Thyroid gland (tissue), 4 donors: ENCODE measurements at regions of chr10 and their contacts with region 1.

Region 1: DNA sequence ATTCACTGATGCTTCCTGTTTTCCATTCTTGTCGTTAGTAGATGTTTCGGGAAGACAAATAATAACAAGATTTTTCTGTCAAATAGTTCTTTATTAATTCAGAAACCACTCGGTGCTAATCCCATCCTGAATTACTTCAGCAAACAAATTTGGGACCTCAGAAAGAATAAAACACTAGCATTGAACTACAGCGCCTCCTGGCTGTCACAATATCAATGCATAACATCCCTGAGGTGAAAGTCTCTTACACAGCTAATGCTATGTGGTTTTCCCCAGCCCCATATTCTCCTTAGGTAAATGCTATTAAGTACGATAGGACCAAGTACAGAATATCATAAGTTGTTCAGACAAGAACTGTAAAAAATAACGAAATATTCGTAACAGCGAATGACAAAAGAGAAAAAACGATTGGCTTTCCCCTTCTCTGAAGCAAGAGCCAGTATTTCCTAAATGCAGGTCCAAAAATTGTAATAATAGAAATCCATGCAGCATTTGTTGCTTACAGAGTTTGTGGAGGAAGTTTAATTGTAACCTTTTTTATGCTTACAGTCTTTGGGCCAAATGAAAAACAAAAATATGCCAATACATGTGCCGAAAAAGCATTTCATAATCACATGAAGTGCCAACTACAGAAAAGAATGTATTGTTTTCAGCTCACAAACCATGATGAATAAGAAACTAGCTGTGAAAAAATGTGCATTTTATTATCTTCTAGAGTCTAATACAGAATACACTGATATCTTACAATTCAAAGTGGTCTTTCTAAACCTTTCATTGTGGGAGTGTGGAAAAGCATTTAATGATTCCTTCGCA is 47.3 kb downstream of the MYPN start:
- DNase-seq: peak; percentile 52 to 57
- H3K4me3 ChIP-seq: no peak overlapping the region
- H3K27ac ChIP-seq: no peak overlapping the region
- H3K4me1 ChIP-seq: peaks cover 0 to 11% of the 10 kb centered on the region in 2 donors
- H3K27me3 ChIP-seq: no peaks in the 10 kb centered on the region
- CTCF ChIP-seq: peak; percentile 53 to 72 (median 60)
- POLR2A ChIP-seq: no peak

Region 2: DNA sequence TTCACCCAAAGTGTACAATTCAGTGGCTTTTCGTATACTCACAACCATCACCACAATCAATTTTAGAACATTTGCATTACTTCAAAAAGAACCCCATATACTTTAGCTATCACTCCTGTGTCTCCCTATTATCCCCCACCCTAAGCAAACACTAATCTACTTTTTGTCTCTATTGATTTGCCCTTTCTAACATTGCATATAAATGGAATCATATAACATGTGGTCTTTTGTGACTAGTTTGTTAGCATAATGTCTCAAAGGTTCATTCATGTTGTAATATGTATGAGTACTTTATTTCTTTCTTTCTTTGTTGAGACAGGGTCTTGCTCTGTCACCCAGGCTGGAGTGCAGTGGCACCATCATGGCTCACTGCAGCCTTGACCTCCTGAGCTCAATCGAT is 297.6 kb before region 1 on chr10:
- intact Hi-C with region 1: loop called (anchors 5 kb)
- DNase-seq: no peak
- H3K4me3 ChIP-seq: no peak overlapping the region
- H3K27ac ChIP-seq: no peak overlapping the region
- H3K4me1 ChIP-seq: no peaks in the 10 kb centered on the region
- H3K27me3 ChIP-seq: no peaks in the 10 kb centered on the region
- CTCF ChIP-seq: no peak
- POLR2A ChIP-seq: no peak